Calu3 (cell line): ENCODE measurements at regions of chr3 and their contacts with region 1.

Region 1: GRCh38 chr3:14261229-14261628 is 82.6 kb downstream of the LSM3 start:
- DNase-seq: peak; percentile 88
- H3K4me3 Mint-ChIP-seq: no peak overlapping the region
- H3K27ac Mint-ChIP-seq: no peak overlapping the region
- H3K4me1 Mint-ChIP-seq: peaks cover 12% of the 10 kb centered on the region
- H3K27me3 Mint-ChIP-seq: no peaks in the 10 kb centered on the region
- CTCF ChIP-seq: peak; percentile 79

Region 2: DNA sequence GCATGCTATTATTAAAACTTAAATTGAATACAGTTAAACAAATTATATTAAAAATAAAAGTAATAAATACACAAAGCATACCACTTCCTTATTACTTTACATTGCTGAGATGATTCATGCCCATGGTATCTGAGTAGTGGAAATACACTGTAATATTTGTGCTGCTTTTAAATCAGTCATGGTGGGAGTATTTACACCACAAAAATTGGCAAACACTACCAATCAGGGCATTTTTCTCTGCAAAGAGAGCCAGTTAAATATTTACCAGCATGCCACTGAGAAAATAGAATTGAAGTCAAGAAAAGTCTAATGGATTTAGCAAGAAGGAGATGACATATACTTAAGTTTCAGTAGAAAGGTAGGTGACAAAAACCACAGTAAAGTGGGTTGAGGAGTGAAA is 1952.7 kb before region 1 on chr3:
- CTCF ChIA-PET with region 1: no interaction called
- intact Hi-C with region 1: no loop called
- DNase-seq: peak; percentile 46
- H3K4me3 Mint-ChIP-seq: peak overlapping the region; percentile 56
- H3K27ac Mint-ChIP-seq: peak overlapping the region; percentile 92
- H3K4me1 Mint-ChIP-seq: peaks cover 47% of the 10 kb centered on the region
- H3K27me3 Mint-ChIP-seq: no peaks in the 10 kb centered on the region
- CTCF ChIP-seq: no peak

Region 3: DNA sequence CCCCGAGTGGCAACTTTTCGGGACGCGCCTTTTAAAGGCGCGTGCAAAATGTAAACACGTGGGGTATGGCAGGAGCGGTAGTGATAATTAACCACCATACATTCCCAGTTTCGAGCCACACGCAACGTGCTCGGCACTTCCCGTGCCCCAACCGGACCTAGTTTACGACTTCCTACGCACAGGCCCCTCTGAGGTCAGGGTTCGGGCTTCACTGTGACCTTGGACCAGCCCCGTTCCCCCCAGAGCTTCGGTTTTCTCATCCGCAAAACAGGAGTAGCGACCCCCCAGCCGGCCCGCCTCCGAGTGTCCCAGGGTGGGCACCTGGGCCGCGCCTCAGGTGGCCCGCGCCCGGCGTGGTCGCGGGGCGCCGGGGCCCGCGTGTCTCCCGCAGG is 137.0 kb before region 1 on chr3:
- CTCF ChIA-PET with region 1: no interaction called
- intact Hi-C with region 1: no loop called
- DNase-seq: peak; percentile 27
- H3K4me3 Mint-ChIP-seq: peak overlapping the region; percentile 97
- H3K27ac Mint-ChIP-seq: peak overlapping the region; percentile 39
- H3K4me1 Mint-ChIP-seq: peaks cover 23% of the 10 kb centered on the region
- H3K27me3 Mint-ChIP-seq: no peaks in the 10 kb centered on the region
- CTCF ChIP-seq: no peak

Region 4: GRCh38 chr3:14319654-14320182 is 58.5 kb after region 1 on chr3:
- CTCF ChIA-PET with region 1: interaction called, 6 read pairs
- intact Hi-C with region 1: loop called (anchors 1 kb)
- DNase-seq: peak; percentile 78
- H3K4me3 Mint-ChIP-seq: peak overlapping the region; percentile 39
- H3K27ac Mint-ChIP-seq: peak overlapping the region; percentile 14
- H3K4me1 Mint-ChIP-seq: peaks cover 28% of the 10 kb centered on the region
- H3K27me3 Mint-ChIP-seq: no peaks in the 10 kb centered on the region
- CTCF ChIP-seq: no peak

Region 5: GRCh38 chr3:14335774-14336756 is 74.8 kb after region 1 on chr3:
- CTCF ChIA-PET with region 1: no interaction called
- intact Hi-C with region 1: no loop called
- DNase-seq: peak; percentile 79
- H3K4me3 Mint-ChIP-seq: no peak overlapping the region
- H3K27ac Mint-ChIP-seq: peak overlapping the region; percentile 82
- H3K4me1 Mint-ChIP-seq: peaks cover 27% of the 10 kb centered on the region
- H3K27me3 Mint-ChIP-seq: no peaks in the 10 kb centered on the region
- CTCF ChIP-seq: no peak

Region 6: DNA sequence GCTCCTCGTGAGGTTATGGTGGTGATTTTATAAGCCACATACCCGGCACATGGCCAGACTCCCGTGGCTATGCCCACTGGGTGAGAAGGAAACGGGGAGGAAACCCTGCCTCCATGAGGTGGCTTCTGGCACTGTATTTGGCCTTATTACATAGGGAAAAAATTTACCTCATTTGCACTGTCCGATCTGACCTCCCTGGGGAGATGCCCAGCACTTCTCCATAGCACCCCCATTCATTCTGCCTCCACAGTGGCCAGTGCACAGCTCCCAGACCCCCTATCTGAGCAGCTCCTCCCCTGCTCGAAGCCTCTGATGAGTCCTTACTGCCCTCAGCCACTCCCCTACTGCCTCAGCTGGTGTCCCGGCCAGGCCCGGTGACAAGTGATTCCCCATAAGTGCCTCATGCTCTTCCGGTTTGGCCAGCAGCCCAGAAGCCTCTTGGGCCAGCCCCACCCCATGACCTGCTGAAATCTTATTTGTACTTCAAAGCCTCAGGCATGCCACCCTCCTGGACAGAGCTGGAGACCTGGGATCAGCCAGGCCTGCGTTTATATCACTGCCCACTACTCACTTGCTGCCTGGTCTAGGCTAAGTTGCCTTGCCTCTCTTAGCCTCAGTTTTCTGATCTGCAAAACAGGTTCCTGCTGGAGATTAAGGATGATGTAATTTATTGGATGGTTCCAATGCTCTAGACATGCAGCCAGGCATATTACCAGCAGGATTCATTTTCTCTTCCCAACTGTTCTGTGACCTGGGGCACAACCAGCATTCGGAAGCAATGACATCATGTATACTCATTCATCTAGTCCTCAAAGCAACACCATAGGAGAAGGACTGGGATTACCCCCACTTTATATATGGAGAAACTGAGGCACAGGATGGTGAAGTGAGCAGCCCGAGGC is 110.6 kb after region 1 on chr3:
- CTCF ChIA-PET with region 1: interaction called, 8 read pairs
- intact Hi-C with region 1: loop called (anchors 1 kb)
- DNase-seq: peak; percentile 89
- H3K4me3 Mint-ChIP-seq: no peak overlapping the region
- H3K27ac Mint-ChIP-seq: peak overlapping the region; percentile 51
- H3K4me1 Mint-ChIP-seq: peaks cover 48% of the 10 kb centered on the region
- H3K27me3 Mint-ChIP-seq: peaks cover 11% of the 10 kb centered on the region
- CTCF ChIP-seq: no peak

Region 7: GRCh38 chr3:14461748-14462324 is 200.6 kb after region 1 on chr3:
- CTCF ChIA-PET with region 1: interaction called, 5 read pairs
- intact Hi-C with region 1: loop called (anchors 2 kb)
- DNase-seq: peak; percentile 73
- H3K4me3 Mint-ChIP-seq: no peak overlapping the region
- H3K27ac Mint-ChIP-seq: no peak overlapping the region
- H3K4me1 Mint-ChIP-seq: peaks cover 33% of the 10 kb centered on the region
- H3K27me3 Mint-ChIP-seq: no peaks in the 10 kb centered on the region
- CTCF ChIP-seq: peak; percentile 44

Region 8: DNA sequence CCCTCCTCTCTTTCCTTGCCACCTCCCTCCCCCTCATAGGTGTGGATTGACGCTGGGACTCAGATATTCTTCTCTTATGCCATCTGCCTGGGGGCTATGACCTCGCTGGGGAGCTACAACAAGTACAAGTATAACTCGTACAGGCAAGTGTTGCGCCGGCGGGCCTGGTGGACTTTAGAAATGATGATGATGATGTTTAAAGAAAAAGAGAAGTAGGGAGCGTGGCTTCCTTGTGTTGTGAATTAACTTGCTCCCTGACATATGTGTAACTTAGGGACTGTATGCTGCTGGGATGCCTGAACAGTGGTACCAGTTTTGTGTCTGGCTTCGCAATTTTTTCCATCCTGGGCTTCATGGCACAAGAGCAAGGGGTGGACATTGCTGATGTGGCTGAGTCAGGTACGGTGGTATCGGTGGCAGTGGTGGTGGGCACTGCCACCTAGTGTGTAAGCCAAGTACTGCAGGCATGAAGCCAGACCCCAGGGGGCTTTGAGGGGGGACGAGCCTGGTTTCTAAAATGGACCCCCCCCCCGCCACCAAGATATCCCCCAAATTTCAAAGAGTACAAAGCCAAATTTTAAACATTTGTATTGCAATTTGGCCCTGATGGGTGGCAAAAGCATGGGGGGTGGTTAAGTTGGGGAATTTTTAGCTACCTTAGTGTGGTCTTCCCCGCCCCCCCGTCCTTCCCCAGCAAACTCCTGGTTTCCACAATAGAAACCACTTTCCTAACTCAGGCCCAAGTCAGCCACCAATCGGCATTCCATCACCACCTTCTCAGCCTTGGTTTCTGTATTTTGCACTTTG is 206.8 kb after region 1 on chr3:
- CTCF ChIA-PET with region 1: interaction called, 3 read pairs
- intact Hi-C with region 1: loop called (anchors 1 kb)
- DNase-seq: peak; percentile 50
- H3K4me3 Mint-ChIP-seq: no peak overlapping the region
- H3K27ac Mint-ChIP-seq: no peak overlapping the region
- H3K4me1 Mint-ChIP-seq: peaks cover 9% of the 10 kb centered on the region
- H3K27me3 Mint-ChIP-seq: no peaks in the 10 kb centered on the region
- CTCF ChIP-seq: peak; percentile 88